ENCODE measurements at regions of chr15 and their contacts with region 1.

Region 1: GRCh38 chr15:82139823-82140268 is 94.0 kb upstream of the MEX3B start:
- DNase-seq: peak; percentile 69
- H3K4me3 ChIP-seq: no peak overlapping the region
- H3K27ac ChIP-seq: peak overlapping the region; percentile 30
- H3K4me1 ChIP-seq: peaks cover 14% of the 10 kb centered on the region
- H3K27me3 ChIP-seq: no peaks in the 10 kb centered on the region
- CTCF ChIP-seq: peak; percentile 51 to 54
- POLR2A ChIP-seq: no peak

Region 2: DNA sequence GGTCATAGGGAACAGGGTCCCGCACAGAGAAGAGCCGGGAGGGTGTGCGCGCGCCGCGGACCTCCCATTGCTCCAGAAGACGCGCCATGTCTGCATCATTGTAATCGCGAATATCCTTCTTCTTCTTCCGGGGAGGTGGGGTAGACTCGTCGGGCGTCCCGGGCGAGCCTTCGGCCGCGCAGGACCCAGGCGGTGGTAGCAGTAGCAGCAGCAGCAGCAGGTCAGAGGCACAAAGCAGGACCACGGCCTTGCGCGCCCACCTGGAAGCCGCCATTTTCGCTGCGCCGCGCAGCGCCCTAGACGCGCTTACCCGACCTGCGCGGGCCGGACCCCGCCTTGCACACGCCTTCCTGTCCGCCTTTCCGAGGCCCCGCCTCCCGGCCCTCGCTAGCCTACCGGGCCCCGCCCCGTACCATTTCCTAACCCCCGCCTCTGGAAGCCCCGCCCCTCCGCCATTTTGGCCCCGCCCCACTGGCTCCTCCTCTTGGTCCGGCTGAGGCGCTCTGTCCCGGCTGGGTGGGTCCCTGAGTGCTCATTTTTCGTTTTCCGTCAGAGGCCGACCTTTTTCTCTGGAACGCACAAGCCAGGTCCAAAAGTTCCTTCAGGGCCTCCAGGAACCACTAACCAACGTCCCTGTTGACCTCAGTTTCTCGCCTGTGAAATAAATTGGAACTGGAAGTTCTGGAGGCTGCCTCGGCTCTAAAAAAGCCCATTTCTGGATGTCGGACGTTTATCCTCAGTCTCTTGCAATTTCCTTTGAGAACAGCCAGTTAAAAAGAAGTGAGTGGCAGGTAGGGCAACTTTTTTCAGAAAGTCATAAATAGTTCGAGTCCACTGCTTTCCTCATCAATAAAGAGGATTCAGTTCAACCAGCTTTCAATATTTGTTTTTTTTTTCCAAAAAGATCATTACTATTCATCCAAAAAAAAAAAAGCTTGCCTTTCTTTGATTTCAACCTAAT is 1150.0 kb before region 1 on chr15 and contains the start of gene MESD:
- CTCF ChIA-PET with region 1: no interaction called
- POLR2A ChIA-PET with region 1: no interaction called
- dilution Hi-C with region 1: no loop called
- intact Hi-C with region 1: loop called (anchors 10 kb)
- DNase-seq: peak; percentile 96
- H3K4me3 ChIP-seq: peak within 1 kb of the TSS; percentile 61 to 86 (median 77)
- H3K27ac ChIP-seq: peak within 1 kb of the TSS; percentile 75
- H3K4me1 ChIP-seq: peaks cover 18% of the 10 kb centered on the region
- H3K27me3 ChIP-seq: no peaks in the 10 kb centered on the region
- CTCF ChIP-seq: no peak
- POLR2A ChIP-seq: peak; percentile 95
- total RNA-seq, gene MESD: 30.5 and 32.9 TPM in 2 replicates

Region 3: GRCh38 chr15:81880314-81880713 is 259.5 kb before region 1 on chr15:
- CTCF ChIA-PET with region 1: no interaction called
- POLR2A ChIA-PET with region 1: no interaction called
- dilution Hi-C with region 1: no loop called
- intact Hi-C with region 1: no loop called
- DNase-seq: no peak
- H3K4me3 ChIP-seq: no peak overlapping the region
- H3K27ac ChIP-seq: no peak overlapping the region
- H3K4me1 ChIP-seq: no peaks in the 10 kb centered on the region
- H3K27me3 ChIP-seq: no peaks in the 10 kb centered on the region
- CTCF ChIP-seq: no peak
- POLR2A ChIP-seq: no peak

Region 4: GRCh38 chr15:82129761-82130160 is 10.1 kb before region 1 on chr15:
- CTCF ChIA-PET with region 1: interaction called, 12 read pairs
- POLR2A ChIA-PET with region 1: no interaction called
- dilution Hi-C with region 1: no loop called
- intact Hi-C with region 1: no loop called
- DNase-seq: no peak
- H3K4me3 ChIP-seq: no peak overlapping the region
- H3K27ac ChIP-seq: no peak overlapping the region
- H3K4me1 ChIP-seq: no peaks in the 10 kb centered on the region
- H3K27me3 ChIP-seq: no peaks in the 10 kb centered on the region
- CTCF ChIP-seq: no peak
- POLR2A ChIP-seq: no peak

Region 5: DNA sequence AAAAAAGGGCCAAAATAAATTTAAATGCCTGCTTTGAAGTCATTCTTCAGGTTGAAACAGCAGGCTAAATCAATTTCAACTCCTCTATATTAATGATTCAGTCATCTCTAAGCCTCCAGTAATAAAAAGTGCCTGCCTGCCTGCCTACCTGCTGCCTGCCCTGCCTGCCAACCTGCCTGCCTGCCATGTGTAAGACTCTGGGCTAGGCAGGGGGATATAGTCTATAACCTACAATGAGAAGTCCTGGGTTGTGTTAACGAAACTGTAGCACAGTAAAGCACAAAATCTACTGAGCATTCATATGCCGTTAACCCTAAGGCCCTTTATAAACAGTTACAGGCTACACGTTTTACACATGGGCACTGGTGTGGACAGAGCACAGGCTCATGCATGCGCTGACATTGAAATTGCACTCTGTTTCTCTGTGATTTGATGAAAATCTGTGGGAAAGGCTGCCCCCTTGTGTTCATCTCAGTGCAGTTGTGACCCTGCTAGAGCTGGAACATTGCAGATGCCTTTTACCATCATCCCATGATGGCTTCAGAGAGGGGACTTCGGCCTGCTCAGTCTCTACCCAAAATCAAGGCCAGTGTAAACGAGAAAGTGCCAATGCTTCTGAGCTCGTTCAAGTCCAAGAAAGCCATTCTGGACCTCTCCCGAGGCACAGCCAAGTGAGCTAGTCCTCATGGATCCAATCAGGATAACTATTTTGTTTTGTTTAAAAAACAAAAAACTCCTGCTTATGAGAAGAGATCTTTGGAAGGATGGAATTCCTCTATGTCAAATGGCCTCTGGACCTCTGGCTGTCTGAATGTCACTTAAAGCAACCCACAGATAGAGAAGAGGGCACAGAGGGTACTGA is 58.1 kb after region 1 on chr15:
- CTCF ChIA-PET with region 1: interaction called, 11 read pairs
- POLR2A ChIA-PET with region 1: interaction called, 3 read pairs
- dilution Hi-C with region 1: no loop called
- intact Hi-C with region 1: no loop called
- DNase-seq: peak; percentile 74
- H3K4me3 ChIP-seq: no peak overlapping the region
- H3K27ac ChIP-seq: no peak overlapping the region
- H3K4me1 ChIP-seq: no peaks in the 10 kb centered on the region
- H3K27me3 ChIP-seq: no peaks in the 10 kb centered on the region
- CTCF ChIP-seq: peak; percentile 75 to 81
- POLR2A ChIP-seq: no peak